OCI-LY7 (cell line): ENCODE measurements at regions of chr5 and their contacts with region 1.

Region 1: GRCh38 chr5:6525910-6526309 is 77.3 kb downstream of the UBE2QL1 start:
- DNase-seq: peak; percentile 4
- H3K4me3 ChIP-seq: no peak overlapping the region
- H3K27ac ChIP-seq: no peak overlapping the region
- H3K4me1 ChIP-seq: no peaks in the 10 kb centered on the region
- CTCF ChIP-seq: peak; percentile 40

Region 2: GRCh38 chr5:6159862-6160370 is 366.0 kb before region 1 on chr5:
- CTCF ChIA-PET with region 1: no interaction called
- POLR2A ChIA-PET with region 1: no interaction called
- intact Hi-C with region 1: loop called (anchors 5 kb)
- DNase-seq: no peak
- H3K4me3 ChIP-seq: no peak overlapping the region
- H3K27ac ChIP-seq: no peak overlapping the region
- H3K4me1 ChIP-seq: no peaks in the 10 kb centered on the region
- CTCF ChIP-seq: no peak